B cell (primary cell): ENCODE measurements at regions of chr3 and their contacts with region 1.

Region 1: DNA sequence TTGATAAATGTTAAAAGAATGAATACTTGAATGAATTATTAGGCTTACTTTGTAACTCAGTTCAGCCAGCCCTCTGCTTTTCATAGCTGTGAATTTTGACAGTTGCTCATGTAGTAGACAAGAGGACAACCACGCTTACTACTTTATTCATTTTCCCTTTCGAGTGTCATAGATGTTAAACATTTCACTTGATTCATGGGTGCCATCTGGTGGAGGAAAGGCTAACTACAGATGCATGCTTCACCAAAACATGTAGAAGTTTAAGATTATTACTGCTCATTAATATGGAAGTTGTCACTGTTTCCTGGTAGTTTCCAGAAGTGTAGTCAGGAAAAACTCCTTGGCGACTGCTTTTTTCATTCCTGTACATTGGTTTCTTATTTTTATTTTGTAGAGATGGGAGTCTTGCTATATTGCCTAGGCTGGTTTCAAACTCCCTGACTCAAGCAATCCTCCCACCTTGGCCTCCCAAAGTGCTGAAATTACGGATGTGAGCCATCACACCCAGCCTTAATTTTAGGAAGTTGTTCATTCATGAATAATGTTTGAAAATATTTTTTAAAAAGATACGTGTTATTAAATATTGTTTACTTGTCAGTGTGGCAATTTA is 163.2 kb downstream of the B3GALNT1 start:
- DNase-seq: peak; percentile 72
- ATAC-seq: peak; percentile 81
- H3K4me3 ChIP-seq: no peak overlapping the region
- H3K4me3 Mint-ChIP-seq: no peak overlapping the region
- H3K27ac ChIP-seq: no peak overlapping the region
- H3K27ac Mint-ChIP-seq: no peak overlapping the region
- H3K4me1 ChIP-seq: no peaks in the 10 kb centered on the region
- H3K4me1 Mint-ChIP-seq: peaks cover 5% of the 10 kb centered on the region
- H3K27me3 ChIP-seq: no peaks in the 10 kb centered on the region
- H3K27me3 Mint-ChIP-seq: no peaks in the 10 kb centered on the region
- CTCF ChIP-seq: peak; percentile 94

Region 2: GRCh38 chr3:160653512-160653911 is 288.5 kb before region 1 on chr3:
- CTCF ChIA-PET with region 1: interaction called, 7 read pairs
- POLR2A ChIA-PET with region 1: no interaction called
- intact Hi-C with region 1: loop called (anchors 1 kb)
- DNase-seq: no peak
- ATAC-seq: no peak
- H3K4me3 ChIP-seq: no peak overlapping the region
- H3K4me3 Mint-ChIP-seq: no peak overlapping the region
- H3K27ac ChIP-seq: no peak overlapping the region
- H3K27ac Mint-ChIP-seq: no peak overlapping the region
- H3K4me1 ChIP-seq: no peaks in the 10 kb centered on the region
- H3K4me1 Mint-ChIP-seq: no peaks in the 10 kb centered on the region
- H3K27me3 ChIP-seq: peaks cover 0 to 3% (median 0%) of the 10 kb centered on the region in 4 experiments
- H3K27me3 Mint-ChIP-seq: peaks cover 16% of the 10 kb centered on the region
- CTCF ChIP-seq: no peak

Region 3: DNA sequence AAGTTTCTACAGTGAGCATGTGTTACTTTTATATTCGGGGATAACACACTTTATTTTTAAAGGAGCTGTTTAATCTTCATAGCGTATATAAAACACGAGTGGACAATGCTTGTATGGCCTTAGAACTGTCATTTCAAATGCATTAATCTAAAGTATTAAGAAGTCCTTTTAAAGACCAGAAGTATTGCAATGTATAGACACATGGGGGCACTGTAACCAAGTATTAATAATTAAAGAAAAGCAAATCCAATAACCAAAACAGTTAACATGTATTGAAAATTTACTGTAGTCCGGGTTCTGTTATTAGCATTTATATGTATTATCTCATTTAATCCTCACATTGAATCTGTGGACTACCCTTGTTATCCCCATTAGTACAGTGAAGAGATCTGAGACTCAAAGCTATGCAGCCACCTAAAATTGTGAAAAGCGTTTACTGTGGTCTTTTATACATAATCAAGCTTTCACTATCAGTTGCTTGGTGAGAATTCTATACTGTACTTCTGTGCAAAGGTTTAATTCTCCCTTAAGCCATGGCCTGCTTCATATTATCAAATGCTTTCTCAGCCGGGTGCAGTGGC is 254.9 kb before region 1 on chr3:
- CTCF ChIA-PET with region 1: interaction called, 16 read pairs
- POLR2A ChIA-PET with region 1: no interaction called
- intact Hi-C with region 1: loop called (anchors 1 kb)
- DNase-seq: peak; percentile 25
- ATAC-seq: peak; percentile 28
- H3K4me3 ChIP-seq: no peak overlapping the region
- H3K4me3 Mint-ChIP-seq: no peak overlapping the region
- H3K27ac ChIP-seq: no peak overlapping the region
- H3K27ac Mint-ChIP-seq: no peak overlapping the region
- H3K4me1 ChIP-seq: no peaks in the 10 kb centered on the region
- H3K4me1 Mint-ChIP-seq: no peaks in the 10 kb centered on the region
- H3K27me3 ChIP-seq: no peaks in the 10 kb centered on the region
- H3K27me3 Mint-ChIP-seq: peaks cover 4% of the 10 kb centered on the region
- CTCF ChIP-seq: peak; percentile 54

Region 4: DNA sequence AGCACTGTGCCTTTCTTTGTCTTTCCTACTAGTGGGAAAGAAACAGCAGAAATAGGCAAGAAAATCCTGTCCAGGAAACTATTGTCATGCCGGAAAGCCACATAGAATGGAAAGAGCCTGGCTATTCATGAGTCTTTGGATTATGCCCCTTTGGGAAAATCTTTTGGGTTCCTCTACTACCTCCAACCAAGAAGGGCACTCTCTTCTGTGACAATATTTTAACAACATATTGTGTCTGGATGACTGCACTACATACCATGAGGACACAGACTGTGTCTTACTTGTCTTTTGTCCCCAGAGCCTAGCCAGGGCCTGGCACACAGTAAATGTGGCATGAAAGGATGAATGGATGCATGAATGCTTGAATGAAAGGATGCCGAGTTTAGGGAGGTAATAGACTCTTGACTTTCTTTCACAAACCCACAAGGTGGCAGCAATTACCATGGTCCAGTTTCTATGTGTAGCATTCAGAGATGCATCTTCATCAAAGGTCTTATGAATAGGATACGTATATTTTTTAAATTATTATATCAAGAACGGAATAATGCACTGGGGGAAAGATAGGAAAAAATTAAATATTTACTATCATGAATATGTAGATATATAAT is 234.7 kb before region 1 on chr3:
- CTCF ChIA-PET with region 1: interaction called, 28 read pairs
- POLR2A ChIA-PET with region 1: no interaction called
- intact Hi-C with region 1: no loop called
- DNase-seq: peak; percentile 54
- ATAC-seq: peak; percentile 39
- H3K4me3 ChIP-seq: no peak overlapping the region
- H3K4me3 Mint-ChIP-seq: no peak overlapping the region
- H3K27ac ChIP-seq: no peak overlapping the region
- H3K27ac Mint-ChIP-seq: no peak overlapping the region
- H3K4me1 ChIP-seq: no peaks in the 10 kb centered on the region
- H3K4me1 Mint-ChIP-seq: no peaks in the 10 kb centered on the region
- H3K27me3 ChIP-seq: peaks cover 0 to 18% (median 7%) of the 10 kb centered on the region in 4 experiments
- H3K27me3 Mint-ChIP-seq: peaks cover 30% of the 10 kb centered on the region
- CTCF ChIP-seq: peak; percentile 75

Region 5: DNA sequence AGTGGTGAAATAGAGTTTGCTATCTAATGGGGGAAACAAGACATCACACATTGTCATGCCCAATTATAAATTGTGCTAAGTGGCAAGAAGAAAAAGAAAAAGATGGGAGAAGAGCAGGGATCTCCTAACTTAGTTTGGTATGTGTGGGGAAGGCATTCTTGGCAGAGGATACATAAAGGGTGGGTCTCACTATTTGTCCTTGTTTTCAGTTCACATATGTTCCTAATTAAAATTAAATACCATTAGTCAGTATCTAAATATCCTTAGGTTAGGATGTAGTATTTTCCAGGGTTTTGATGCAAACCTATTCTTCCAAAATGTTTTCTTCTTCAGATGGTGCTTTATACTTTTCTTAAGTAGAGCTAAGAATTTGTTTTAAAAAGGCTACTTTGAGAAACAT is 10.5 kb before region 1 on chr3:
- CTCF ChIA-PET with region 1: interaction called, 19 read pairs
- POLR2A ChIA-PET with region 1: no interaction called
- intact Hi-C with region 1: no loop called
- DNase-seq: no peak
- ATAC-seq: no peak
- H3K4me3 ChIP-seq: no peak overlapping the region
- H3K4me3 Mint-ChIP-seq: no peak overlapping the region
- H3K27ac ChIP-seq: no peak overlapping the region
- H3K27ac Mint-ChIP-seq: no peak overlapping the region
- H3K4me1 ChIP-seq: no peaks in the 10 kb centered on the region
- H3K4me1 Mint-ChIP-seq: no peaks in the 10 kb centered on the region
- H3K27me3 ChIP-seq: no peaks in the 10 kb centered on the region
- H3K27me3 Mint-ChIP-seq: no peaks in the 10 kb centered on the region
- CTCF ChIP-seq: no peak

Region 6: DNA sequence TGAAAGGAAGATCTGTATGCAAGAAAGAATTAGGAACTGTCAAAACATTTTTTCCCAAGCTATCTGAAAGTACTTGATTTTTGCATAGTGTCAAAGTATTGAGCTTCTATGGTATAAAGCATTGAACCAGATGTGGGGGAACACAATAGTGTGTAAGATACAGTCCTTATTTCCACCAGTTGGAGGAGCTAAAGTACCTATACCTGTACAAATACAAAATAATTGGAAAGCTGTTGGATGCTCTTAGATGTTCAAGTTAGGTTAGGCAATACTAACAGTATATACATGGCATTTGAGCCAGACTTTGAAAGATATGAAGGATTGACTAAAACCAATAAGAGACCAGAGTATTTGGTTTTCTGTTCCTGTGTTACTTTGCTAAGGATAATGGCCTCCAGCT is 14.8 kb after region 1 on chr3:
- CTCF ChIA-PET with region 1: interaction called, 19 read pairs
- POLR2A ChIA-PET with region 1: no interaction called
- intact Hi-C with region 1: no loop called
- DNase-seq: peak; percentile 19
- ATAC-seq: no peak
- H3K4me3 ChIP-seq: no peak overlapping the region
- H3K4me3 Mint-ChIP-seq: no peak overlapping the region
- H3K27ac ChIP-seq: no peak overlapping the region
- H3K27ac Mint-ChIP-seq: no peak overlapping the region
- H3K4me1 ChIP-seq: no peaks in the 10 kb centered on the region
- H3K4me1 Mint-ChIP-seq: no peaks in the 10 kb centered on the region
- H3K27me3 ChIP-seq: no peaks in the 10 kb centered on the region
- H3K27me3 Mint-ChIP-seq: no peaks in the 10 kb centered on the region
- CTCF ChIP-seq: peak; percentile 41

Region 7: GRCh38 chr3:161471211-161471610 is 529.2 kb after region 1 on chr3:
- CTCF ChIA-PET with region 1: no interaction called
- POLR2A ChIA-PET with region 1: no interaction called
- intact Hi-C with region 1: no loop called
- DNase-seq: no peak
- ATAC-seq: no peak
- H3K4me3 ChIP-seq: no peak overlapping the region
- H3K4me3 Mint-ChIP-seq: no peak overlapping the region
- H3K27ac ChIP-seq: no peak overlapping the region
- H3K27ac Mint-ChIP-seq: no peak overlapping the region
- H3K4me1 ChIP-seq: no peaks in the 10 kb centered on the region
- H3K4me1 Mint-ChIP-seq: no peaks in the 10 kb centered on the region
- H3K27me3 ChIP-seq: no peaks in the 10 kb centered on the region
- H3K27me3 Mint-ChIP-seq: no peaks in the 10 kb centered on the region
- CTCF ChIP-seq: no peak